Activated T-helper 1 cell treated with anti-CD3 and anti-CD28 coated beads, Interleukin-12 subunit alpha, Interleukin-12 subunit beta, Interleukin-2, Interleukin-4 antibody, amounts not matched to agents 30 ng/mL and 10 ng/mL and 1 ng/mL, durations not matched to agents 14 hours and 24 hours and 36 hours (primary cell): ENCODE measurements at regions of chr12 and their contacts with region 1.

Region 1: DNA sequence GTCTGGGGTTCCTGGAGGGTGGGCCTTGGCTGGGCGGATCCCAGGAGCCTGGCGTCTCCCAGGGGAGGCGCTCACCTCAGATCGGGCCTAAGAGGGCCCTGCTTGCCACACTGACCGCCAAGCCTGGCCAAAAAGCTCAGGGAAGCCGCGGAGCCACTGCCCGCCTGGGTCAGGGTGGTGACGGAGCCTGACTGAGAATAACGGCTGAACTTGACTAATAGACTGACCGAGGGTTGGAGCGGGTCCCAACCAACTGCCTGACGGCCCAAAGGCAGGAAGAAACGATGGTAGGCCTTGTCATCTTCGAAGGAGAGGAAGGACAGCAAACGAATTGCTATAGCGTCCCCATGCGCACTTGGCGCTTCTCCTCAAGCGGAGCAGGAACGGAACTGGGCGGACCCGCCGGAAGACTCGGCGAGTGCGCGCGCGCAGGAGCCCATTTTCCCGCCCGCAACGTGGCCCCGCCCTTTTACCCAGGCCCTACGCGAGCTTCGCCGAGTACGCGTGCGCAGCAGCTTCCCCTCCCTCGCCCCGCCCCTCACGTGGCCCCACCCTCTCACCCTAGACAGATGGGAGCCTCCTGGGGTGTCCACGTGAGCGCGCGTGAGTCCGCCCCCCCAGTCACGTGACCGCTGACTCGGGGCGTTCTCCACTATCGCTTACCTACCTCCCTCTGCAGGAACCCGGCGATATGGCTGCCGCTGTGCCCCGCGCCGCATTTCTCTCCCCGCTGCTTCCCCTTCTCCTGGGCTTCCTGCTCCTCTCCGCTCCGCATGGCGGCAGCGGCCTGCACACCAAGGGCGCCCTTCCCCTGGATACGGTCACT is at the starts of genes ERP29 and TMEM116:
- DNase-seq: peak; percentile 98
- H3K4me3 Mint-ChIP-seq: peak within 1 kb of the TSS; percentile 87
- H3K27ac Mint-ChIP-seq: peak within 1 kb of the TSS; percentile 89
- H3K4me1 Mint-ChIP-seq: peaks cover 51% of the 10 kb centered on the region
- H3K27me3 Mint-ChIP-seq: no peaks in the 10 kb centered on the region
- total RNA-seq, gene ERP29: 60.9 and 62.5 TPM in 2 replicates
- total RNA-seq, gene TMEM116: 10.6 and 11.0 TPM in 2 replicates

Region 2: GRCh38 chr12:111841750-111842555 is 171.0 kb before region 1 on chr12 and contains the start of gene MAPKAPK5:
- intact Hi-C with region 1: loop called (anchors 1 kb)
- DNase-seq: peak; percentile 95
- H3K4me3 Mint-ChIP-seq: peak within 1 kb of the TSS; percentile 98
- H3K27ac Mint-ChIP-seq: peak within 1 kb of the TSS; percentile 99
- H3K4me1 Mint-ChIP-seq: peaks cover 49% of the 10 kb centered on the region
- H3K27me3 Mint-ChIP-seq: no peaks in the 10 kb centered on the region
- total RNA-seq, gene MAPKAPK5: 82.1 and 86.5 TPM in 2 replicates

Region 3: DNA sequence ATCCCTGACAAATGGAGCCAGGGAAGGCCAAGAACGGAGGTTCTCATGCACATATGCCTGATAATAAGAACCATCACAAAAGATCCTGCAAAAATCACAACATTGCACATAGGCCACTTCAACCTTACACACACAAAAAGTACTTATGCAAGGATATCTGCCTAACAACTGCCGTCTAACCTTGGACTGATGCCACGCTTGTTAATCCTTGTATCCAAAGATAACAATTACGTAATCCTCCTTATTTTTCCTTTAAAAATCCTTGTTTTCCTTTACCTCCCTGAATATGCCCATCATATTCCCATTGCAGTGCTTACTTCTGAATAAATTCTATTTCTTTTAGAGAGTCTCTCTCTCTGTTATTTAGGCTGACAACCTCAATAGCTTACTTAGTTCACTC is 59.5 kb before region 1 on chr12:
- intact Hi-C with region 1: loop called (anchors 1 kb)
- DNase-seq: no peak
- H3K4me3 Mint-ChIP-seq: no peak overlapping the region
- H3K27ac Mint-ChIP-seq: no peak overlapping the region
- H3K4me1 Mint-ChIP-seq: peaks cover 37% of the 10 kb centered on the region
- H3K27me3 Mint-ChIP-seq: peaks cover 2% of the 10 kb centered on the region

Region 4: DNA sequence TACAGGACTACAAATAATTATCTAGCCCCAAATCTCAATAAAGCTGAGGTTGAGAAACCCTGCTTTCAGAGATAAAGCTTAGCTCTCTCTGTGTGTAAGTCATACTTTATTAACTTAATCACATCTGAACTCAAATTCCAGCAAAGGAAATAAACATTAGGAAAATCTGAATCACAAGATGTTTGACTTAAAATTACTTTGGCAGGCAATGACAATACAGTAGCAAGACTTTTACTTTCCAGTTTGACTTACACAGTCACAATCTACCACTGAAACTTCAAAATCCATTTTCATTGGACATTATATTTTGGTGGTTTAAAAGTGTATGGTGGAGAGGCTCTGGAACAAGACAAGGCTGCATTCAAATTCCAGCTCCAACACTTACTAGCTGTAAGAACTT is 11.4 kb before region 1 on chr12:
- intact Hi-C with region 1: loop called (anchors 1 kb)
- DNase-seq: no peak
- H3K4me3 Mint-ChIP-seq: peak overlapping the region; percentile 35
- H3K27ac Mint-ChIP-seq: no peak overlapping the region
- H3K4me1 Mint-ChIP-seq: peaks cover 63% of the 10 kb centered on the region
- H3K27me3 Mint-ChIP-seq: no peaks in the 10 kb centered on the region

Region 5: DNA sequence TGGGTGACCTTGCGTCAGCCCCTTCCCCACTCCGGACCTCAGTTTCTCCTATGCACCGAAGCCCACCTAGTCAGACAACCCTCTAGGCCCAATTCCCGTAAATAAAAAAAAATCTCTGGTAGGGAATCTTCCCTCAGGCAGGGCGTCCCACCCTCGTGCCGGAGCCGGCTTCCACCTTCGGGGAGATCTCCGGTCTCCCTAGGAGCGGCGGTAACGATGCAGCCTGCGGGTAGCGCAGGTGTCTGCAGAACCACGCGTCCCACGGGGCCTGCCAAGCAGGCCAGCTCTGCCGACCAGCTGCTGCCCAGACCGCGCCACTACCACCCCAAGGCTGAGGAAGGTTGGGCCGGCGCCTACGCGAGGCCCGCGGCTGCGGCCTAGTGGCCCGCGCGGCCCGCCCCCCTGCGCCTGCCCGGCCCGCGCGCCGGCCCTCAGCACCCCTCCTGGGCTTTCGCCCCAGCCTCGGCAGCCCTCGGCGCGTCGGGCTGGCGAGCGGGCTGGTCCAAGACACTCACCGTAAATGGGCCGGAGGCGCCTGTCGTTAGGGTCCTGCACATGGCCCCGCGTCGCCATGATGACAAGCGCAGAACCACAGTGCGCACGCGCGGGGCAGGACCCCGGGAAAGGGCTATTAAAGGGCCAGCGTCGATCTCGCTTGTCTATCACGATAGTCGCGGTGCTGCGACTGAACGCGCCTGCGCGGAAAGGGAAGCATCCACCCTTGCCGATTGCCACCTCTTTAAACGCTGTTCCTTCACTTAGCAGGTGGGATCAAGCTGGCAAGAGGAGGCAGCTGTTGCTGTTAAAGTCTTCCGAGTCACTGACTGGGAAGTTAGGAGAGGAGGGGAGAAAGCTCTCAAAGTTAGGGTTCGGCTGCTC is 95.5 kb after region 1 on chr12 and contains the start of gene NAA25:
- intact Hi-C with region 1: loop called (anchors 1 kb)
- DNase-seq: peak; percentile 84
- H3K4me3 Mint-ChIP-seq: peak within 1 kb of the TSS; percentile 99
- H3K27ac Mint-ChIP-seq: peak within 1 kb of the TSS; percentile 98
- H3K4me1 Mint-ChIP-seq: peaks cover 42% of the 10 kb centered on the region
- H3K27me3 Mint-ChIP-seq: no peaks in the 10 kb centered on the region
- total RNA-seq, gene NAA25: 52.2 and 58.1 TPM in 2 replicates

Region 6: GRCh38 chr12:112409064-112409905 is 396.3 kb after region 1 on chr12 and contains the start of gene RPL6:
- intact Hi-C with region 1: loop called (anchors 1 kb)
- DNase-seq: peak; percentile 75
- H3K4me3 Mint-ChIP-seq: peak within 1 kb of the TSS; percentile 100
- H3K27ac Mint-ChIP-seq: peak within 1 kb of the TSS; percentile 100
- H3K4me1 Mint-ChIP-seq: peaks cover 33% of the 10 kb centered on the region
- H3K27me3 Mint-ChIP-seq: no peaks in the 10 kb centered on the region
- total RNA-seq, gene RPL6: 1,690 and 1,698 TPM in 2 replicates

Region 7: GRCh38 chr12:113185774-113186365 is 1172.9 kb after region 1 on chr12:
- intact Hi-C with region 1: no loop called
- DNase-seq: no peak
- H3K4me3 Mint-ChIP-seq: peak overlapping the region; percentile 92
- H3K27ac Mint-ChIP-seq: peak overlapping the region; percentile 89
- H3K4me1 Mint-ChIP-seq: peaks cover 34% of the 10 kb centered on the region
- H3K27me3 Mint-ChIP-seq: no peaks in the 10 kb centered on the region